Gastrocnemius medialis (tissue), 4 donors: ENCODE measurements at regions of chr17 and their contacts with region 1.

Region 1: DNA sequence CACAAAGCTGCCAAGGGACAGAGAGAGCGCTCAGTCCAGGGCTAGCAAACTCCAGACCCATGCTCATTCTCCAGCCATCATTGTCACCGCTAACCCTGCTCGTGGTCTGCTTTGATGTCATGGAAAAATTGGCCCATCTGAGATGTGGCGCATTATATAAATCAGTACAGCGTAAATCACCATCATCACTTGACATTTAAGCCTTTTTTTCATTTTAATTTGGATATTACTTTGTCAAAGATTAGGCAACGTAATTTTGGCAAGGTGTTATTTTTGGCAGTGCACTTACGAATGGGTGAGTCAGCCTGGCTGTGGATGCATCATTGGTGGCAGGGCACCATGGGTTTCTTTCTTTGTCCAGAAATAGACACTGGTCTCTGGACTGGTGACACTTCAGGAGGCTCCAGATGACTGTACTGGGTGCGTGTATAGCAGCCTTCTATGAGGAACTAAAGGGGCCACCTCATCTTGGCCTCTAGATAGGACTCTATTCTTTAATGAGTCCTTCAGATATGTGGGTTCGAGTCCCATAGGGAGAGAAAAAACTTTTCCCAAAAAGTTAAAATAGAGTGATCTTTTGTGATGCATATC is 166.3 kb downstream of the MSI2 start:
- DNase-seq: peak; percentile 82 to 89
- ATAC-seq: peak; percentile 98 to 99
- H3K4me3 ChIP-seq: no peak overlapping the region
- H3K27ac ChIP-seq: peak overlapping the region; percentile 77 to 81 (median 78)
- H3K4me1 ChIP-seq: peaks cover 26 to 39% of the 10 kb centered on the region in 2 donors
- H3K27me3 ChIP-seq: no peaks in the 10 kb centered on the region
- CTCF ChIP-seq: no peak
- POLR2A ChIP-seq: no peak

Region 2: DNA sequence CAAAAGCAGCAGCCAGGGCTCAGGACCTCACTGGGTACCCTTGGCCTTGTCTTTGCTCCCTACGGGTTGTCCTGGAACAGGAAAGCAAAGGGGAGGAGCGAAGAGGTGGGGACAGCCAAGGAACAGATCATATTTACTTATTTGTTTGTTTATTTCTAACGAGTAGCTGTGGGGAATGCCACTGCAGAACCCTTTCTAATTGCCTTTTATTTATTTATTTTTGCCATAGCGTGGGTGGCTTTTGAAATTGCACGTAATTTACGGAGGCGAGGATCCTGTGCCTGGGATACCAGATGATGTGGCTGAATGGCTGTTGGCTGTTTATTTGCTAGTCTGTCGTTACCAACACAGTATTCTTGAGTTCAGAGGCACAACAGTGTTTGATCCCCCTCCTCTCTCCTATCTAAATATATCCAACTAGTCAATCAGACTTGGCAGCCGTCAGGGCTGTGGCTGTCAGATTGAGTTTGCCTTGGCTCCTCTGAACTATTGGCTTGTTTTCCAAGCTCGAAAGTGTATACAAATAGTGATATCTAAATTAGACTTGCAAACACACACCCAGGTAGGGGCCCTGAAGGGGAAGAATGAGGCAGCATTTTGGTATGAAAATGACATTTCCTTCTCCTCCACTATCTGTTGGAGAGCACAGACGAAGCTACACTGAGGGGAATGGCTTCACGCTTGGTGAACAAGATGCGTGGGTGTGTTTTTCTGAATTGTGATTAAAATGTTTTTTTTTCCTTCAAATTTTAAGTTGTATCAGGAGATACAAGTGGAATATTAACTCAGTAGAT is 55.9 kb before region 1 on chr17:
- in situ Hi-C with region 1: no loop called
- intact Hi-C with region 1: loop called (anchors 2 kb)
- DNase-seq: peak; percentile 62 to 78
- ATAC-seq: peak; percentile 25 to 52
- H3K4me3 ChIP-seq: peak overlapping the region; percentile 1 to 42 (median 12)
- H3K27ac ChIP-seq: peak overlapping the region; percentile 85 to 90 (median 88)
- H3K4me1 ChIP-seq: peaks cover 85 to 90% of the 10 kb centered on the region in 2 donors
- H3K27me3 ChIP-seq: no peaks in the 10 kb centered on the region
- CTCF ChIP-seq: no peak
- POLR2A ChIP-seq: no peak

Region 3: GRCh38 chr17:58614859-58615459 is 1192.3 kb after region 1 on chr17:
- in situ Hi-C with region 1: no loop called
- intact Hi-C with region 1: no loop called
- DNase-seq: no peak
- ATAC-seq: no peak
- H3K4me3 ChIP-seq: no peak overlapping the region
- H3K27ac ChIP-seq: no peak overlapping the region
- H3K4me1 ChIP-seq: no peaks in the 10 kb centered on the region
- H3K27me3 ChIP-seq: no peaks in the 10 kb centered on the region
- CTCF ChIP-seq: no peak
- POLR2A ChIP-seq: no peak